ENCODE measurements at regions of chr18 and their contacts with region 1.

Region 1: DNA sequence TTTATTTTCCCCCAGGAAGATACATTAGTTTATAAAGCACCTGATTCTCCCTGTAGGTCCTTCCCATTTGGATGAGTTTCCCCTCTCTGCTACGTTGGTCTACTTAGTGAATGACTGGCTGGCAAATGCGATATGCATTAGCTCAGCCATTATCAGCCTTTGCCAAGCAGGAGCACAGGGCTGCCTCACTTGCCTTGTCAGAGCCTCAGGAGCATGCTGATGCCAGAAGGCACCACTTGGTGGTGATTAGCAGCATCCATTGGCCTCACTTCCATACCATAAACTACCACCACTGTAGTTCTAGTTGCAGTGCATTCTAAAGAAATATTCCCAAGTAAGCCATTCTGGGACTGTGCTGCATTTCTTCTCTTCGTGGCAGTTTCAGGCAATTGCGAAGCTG is 442.8 kb upstream of the CHST9 start:
- DNase-seq: no peak
- ATAC-seq: no peak
- H3K4me3 ChIP-seq: no peak overlapping the region
- H3K4me3 Mint-ChIP-seq: no peak overlapping the region
- H3K27ac ChIP-seq: no peak overlapping the region
- H3K27ac Mint-ChIP-seq: no peak overlapping the region
- H3K4me1 ChIP-seq: no peaks in the 10 kb centered on the region
- H3K4me1 Mint-ChIP-seq: no peaks in the 10 kb centered on the region
- H3K27me3 ChIP-seq: no peaks in the 10 kb centered on the region
- H3K27me3 Mint-ChIP-seq: no peaks in the 10 kb centered on the region
- CTCF ChIP-seq: no peak

Region 2: GRCh38 chr18:27645929-27646328 is 18.0 kb after region 1 on chr18:
- CTCF ChIA-PET with region 1: no interaction called
- POLR2A ChIA-PET with region 1: no interaction called
- intact Hi-C with region 1: loop called in 1 of 2 experiments (anchors 1 kb)
- DNase-seq: no peak
- ATAC-seq: no peak
- H3K4me3 ChIP-seq: no peak overlapping the region
- H3K4me3 Mint-ChIP-seq: no peak overlapping the region
- H3K27ac ChIP-seq: no peak overlapping the region
- H3K27ac Mint-ChIP-seq: no peak overlapping the region
- H3K4me1 ChIP-seq: no peaks in the 10 kb centered on the region
- H3K4me1 Mint-ChIP-seq: no peaks in the 10 kb centered on the region
- H3K27me3 ChIP-seq: no peaks in the 10 kb centered on the region
- H3K27me3 Mint-ChIP-seq: no peaks in the 10 kb centered on the region
- CTCF ChIP-seq: no peak

Measured in CD8-positive, alpha-beta T cell (primary cell).